ENCODE measurements at regions of chr17 and their contacts with region 1.

Region 1: GRCh38 chr17:48024937-48025906 is 12.4 kb downstream of the COPZ2 start:
- DNase-seq: peak; percentile 91 to 94
- H3K4me3 ChIP-seq: peak overlapping the region; percentile 68
- H3K27ac ChIP-seq: peak overlapping the region; percentile 84
- H3K4me1 ChIP-seq: peaks cover 27% of the 10 kb centered on the region
- H3K27me3 ChIP-seq: no peaks in the 10 kb centered on the region
- CTCF ChIP-seq: peak; percentile 87

Region 2: DNA sequence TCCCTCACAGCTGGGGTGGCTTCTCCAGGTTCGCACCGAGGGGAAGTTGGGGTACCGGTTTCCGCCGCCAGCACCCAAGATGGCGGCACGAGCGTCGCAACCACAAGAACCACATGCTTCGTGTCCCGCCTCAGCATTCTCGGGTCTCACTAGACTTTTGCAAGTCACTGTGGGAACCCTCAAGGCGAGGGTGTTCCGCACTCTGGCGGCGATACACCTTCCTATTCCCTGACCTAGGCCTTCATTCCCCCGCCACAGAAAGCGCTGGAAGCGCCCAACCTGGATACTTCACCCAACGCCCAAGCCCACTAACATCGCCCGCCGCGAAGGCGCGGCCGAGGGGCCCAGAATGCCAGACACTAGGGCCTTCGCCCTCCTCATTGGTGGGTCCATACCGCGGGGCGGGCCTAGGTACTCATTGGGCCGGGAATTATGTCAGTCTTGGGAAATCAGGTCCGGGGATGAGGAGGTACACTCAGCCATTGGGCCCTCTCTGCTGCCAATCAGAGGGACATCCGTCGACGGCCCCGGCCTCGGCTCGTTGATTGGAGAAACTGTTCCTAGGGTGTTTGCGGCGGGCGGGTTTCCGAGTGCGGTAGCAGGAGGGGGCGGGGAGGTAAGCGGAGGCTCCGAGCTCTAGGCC is 22.6 kb after region 1 on chr17 and contains the start of gene NFE2L1:
- CTCF ChIA-PET with region 1: interaction called, 3 read pairs
- POLR2A ChIA-PET with region 1: interaction called, 3 read pairs
- intact Hi-C with region 1: loop called (anchors 1 kb)
- DNase-seq: peak; percentile 96 to 99
- H3K4me3 ChIP-seq: peak within 1 kb of the TSS; percentile 70
- H3K27ac ChIP-seq: peak within 1 kb of the TSS; percentile 82
- H3K4me1 ChIP-seq: peaks cover 48% of the 10 kb centered on the region
- H3K27me3 ChIP-seq: no peaks in the 10 kb centered on the region
- CTCF ChIP-seq: no peak
- total RNA-seq, gene NFE2L1: 85.5 and 91.7 TPM in 2 replicates

Region 3: GRCh38 chr17:48131216-48131824 is 106.1 kb after region 1 on chr17:
- CTCF ChIA-PET with region 1: interaction called, 3 read pairs
- POLR2A ChIA-PET with region 1: no interaction called
- intact Hi-C with region 1: loop called (anchors 1 kb)
- DNase-seq: peak; percentile 47 to 64
- H3K4me3 ChIP-seq: no peak overlapping the region
- H3K27ac ChIP-seq: no peak overlapping the region
- H3K4me1 ChIP-seq: peaks cover 15% of the 10 kb centered on the region
- H3K27me3 ChIP-seq: no peaks in the 10 kb centered on the region
- CTCF ChIP-seq: peak; percentile 94

Region 4: DNA sequence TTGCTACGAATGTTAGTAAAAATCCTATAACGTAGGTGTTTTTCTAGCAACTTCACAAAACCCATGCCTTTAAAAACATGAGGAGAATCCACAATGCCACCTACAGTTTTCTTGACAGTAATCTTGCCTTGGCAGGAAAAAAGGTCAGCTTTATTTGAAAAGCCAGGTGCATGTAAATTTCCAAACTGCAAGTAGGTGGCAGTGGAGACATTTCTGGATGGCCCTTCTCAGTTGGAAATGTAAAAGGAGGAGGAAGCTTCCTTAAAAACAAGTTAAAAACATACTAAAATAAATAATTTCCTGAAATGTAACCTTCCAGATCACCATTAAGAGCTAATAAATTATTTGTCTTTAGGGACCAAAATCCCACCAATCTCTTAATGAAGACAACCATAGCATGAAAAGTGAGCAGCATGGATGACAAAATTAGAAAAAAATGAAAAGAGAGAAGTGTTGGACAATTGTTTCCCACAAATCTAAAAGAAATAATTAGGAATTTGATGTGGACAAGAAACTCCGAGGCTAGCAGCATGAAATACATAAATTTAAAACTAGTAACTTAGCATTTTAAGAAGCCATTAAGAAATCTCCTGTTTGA is 234.6 kb after region 1 on chr17:
- CTCF ChIA-PET with region 1: no interaction called
- POLR2A ChIA-PET with region 1: no interaction called
- intact Hi-C with region 1: loop called (anchors 5 kb)
- DNase-seq: peak in 1 of 2 experiments; percentile 55
- H3K4me3 ChIP-seq: no peak overlapping the region
- H3K27ac ChIP-seq: no peak overlapping the region
- H3K4me1 ChIP-seq: peaks cover 7% of the 10 kb centered on the region
- H3K27me3 ChIP-seq: no peaks in the 10 kb centered on the region
- CTCF ChIP-seq: peak; percentile 87

Region 5: DNA sequence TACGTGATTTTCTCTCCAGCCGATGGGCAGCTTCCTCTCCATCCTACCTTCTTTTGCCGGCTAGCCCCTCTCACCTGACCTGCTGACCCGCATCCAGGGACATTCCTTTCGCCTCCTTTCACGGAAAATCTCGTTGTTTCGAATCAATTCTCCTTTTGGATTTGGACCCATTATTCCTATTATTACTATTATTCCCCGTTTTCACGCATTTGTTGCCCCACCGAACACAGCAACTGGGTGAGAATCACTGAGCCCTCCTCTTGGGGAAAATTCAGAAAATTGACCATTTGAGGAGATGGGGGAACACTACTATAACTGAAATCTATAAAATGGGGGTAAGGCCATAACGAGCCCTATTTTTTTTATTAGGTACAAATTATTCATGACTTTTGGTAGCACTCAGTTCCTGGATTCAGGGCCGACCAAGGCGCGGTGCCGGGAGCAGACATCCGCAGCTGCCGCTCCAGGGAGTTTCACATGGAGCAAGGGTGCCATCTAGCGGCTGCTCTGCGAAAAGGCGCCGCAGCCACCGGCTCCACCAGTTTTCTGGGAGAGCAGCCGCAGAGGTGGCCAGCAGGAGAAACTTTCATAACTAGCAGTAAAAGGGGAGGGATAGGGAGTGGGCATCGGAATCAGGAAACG is 593.2 kb after region 1 on chr17:
- CTCF ChIA-PET with region 1: no interaction called
- POLR2A ChIA-PET with region 1: no interaction called
- intact Hi-C with region 1: loop called (anchors 2 kb)
- DNase-seq: peak; percentile 73 to 89
- H3K4me3 ChIP-seq: no peak overlapping the region
- H3K27ac ChIP-seq: no peak overlapping the region
- H3K4me1 ChIP-seq: peaks cover 9% of the 10 kb centered on the region; the same call in 1 of the 2 replicates
- H3K27me3 ChIP-seq: no peaks in the 10 kb centered on the region
- CTCF ChIP-seq: peak; percentile 98

Region 6: GRCh38 chr17:48878918-48879898 is 854.0 kb after region 1 on chr17:
- CTCF ChIA-PET with region 1: no interaction called
- POLR2A ChIA-PET with region 1: interaction called, 6 read pairs
- intact Hi-C with region 1: loop called (anchors 5 kb)
- DNase-seq: peak; percentile 49 to 52
- H3K4me3 ChIP-seq: no peak overlapping the region
- H3K27ac ChIP-seq: no peak overlapping the region
- H3K4me1 ChIP-seq: no peaks in the 10 kb centered on the region
- H3K27me3 ChIP-seq: 0 out of 2 replicates have a peak, but pooled peaks cover 4% of the 10 kb centered on the region
- CTCF ChIP-seq: peak; percentile 99

Measured in PC-9 (cell line).